ENCODE measurements at regions of chr19 and their contacts with region 1.

Region 1: DNA sequence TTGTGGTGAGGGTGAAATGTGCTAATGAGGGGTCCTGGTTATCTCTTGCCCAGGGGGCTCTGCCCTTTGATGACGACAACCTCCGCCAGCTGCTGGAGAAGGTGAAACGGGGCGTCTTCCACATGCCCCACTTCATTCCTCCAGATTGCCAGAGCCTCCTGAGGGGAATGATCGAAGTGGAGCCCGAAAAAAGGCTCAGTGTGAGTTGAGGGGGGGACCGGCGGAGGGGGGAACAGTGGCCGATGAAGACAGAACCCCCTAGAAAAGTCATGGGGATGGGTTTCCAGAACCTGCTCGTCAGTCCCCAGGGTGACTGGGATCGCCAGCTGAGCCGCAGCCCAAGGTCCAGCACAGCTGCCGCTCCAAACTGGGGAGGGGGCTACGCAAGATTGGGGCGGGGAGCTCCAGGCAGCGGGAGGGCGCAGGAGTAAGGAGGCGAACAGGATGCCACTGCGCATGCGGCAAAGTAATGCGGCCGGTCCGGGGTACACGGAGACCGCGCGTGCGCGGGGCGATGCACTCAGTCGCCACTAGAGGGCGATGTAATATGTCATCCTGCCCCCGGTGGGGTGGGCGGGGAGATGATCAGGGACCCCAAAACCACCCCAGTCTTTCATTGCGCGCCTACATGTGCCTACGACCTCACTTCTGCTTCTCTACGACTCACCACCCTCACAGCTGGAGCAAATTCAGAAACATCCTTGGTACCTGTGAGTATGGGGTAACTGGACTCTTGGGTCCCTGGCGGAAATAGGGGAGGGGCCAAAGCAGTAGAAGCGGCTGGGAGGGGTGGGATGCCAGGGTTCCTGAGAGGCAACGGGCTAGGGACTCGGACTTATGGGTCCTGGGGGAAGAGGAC is 17.9 kb downstream of the BRSK1 start:
- DNase-seq: peak; percentile 59
- ATAC-seq: peak; percentile 93
- H3K4me3 ChIP-seq: peak overlapping the region; percentile 67; the same call in 1 of the 2 replicates
- H3K27ac ChIP-seq: peak overlapping the region; percentile 27
- H3K4me1 ChIP-seq: peaks cover 11% of the 10 kb centered on the region
- H3K27me3 ChIP-seq: no peaks in the 10 kb centered on the region
- CTCF ChIP-seq: peak; percentile 91 to 97 (median 95)
- EP300 ChIP-seq: no peak
- POLR2A ChIP-seq: peak; percentile 37; the same call in 1 of the 2 replicates
- RAD21 ChIP-seq: peak; percentile 49

Region 2: GRCh38 chr19:55258828-55259539 is 42.7 kb before region 1 on chr19 and contains the start of gene PPP6R1:
- CTCF ChIA-PET with region 1: interaction called, 5 read pairs
- POLR2A ChIA-PET with region 1: interaction called, 4 read pairs
- RAD21 ChIA-PET with region 1: interaction called, 10 read pairs
- SMC1A ChIA-PET with region 1: interaction called, 10 read pairs
- in situ Hi-C with region 1: no loop called
- intact Hi-C with region 1: no loop called
- DNase-seq: peak; percentile 97
- ATAC-seq: peak; percentile 85
- H3K4me3 ChIP-seq: peak within 1 kb of the TSS; percentile 100
- H3K27ac ChIP-seq: peak within 1 kb of the TSS; percentile 96
- H3K4me1 ChIP-seq: peaks cover 7% of the 10 kb centered on the region
- H3K27me3 ChIP-seq: no peaks in the 10 kb centered on the region
- CTCF ChIP-seq: no peak
- EP300 ChIP-seq: 0 out of 4 replicates have a peak, but pooled peaks have one; percentile 5 to 30
- POLR2A ChIP-seq: peak; percentile 89
- RAD21 ChIP-seq: no peak
- polyA plus RNA-seq, gene PPP6R1: 0.80 to 2.5 TPM

Region 3: DNA sequence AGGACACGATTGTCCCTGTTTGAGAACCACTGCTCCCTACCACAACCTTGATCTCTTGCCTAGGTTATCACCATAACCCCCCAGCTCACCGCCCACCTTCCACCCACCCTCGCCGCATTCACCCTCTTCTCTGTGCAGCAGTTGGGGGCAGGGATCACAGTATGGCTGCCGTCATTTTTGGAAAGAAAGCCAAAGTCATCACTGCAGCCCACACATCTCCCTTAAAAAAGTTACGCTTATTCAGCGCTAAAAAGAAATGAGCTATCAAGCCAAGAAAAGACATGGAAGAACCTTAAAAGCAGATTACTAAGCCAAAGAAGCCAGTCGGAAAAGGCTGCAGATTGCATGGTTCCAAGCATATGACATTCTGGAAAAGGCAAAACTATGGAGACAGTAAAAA is 32.4 kb before region 1 on chr19:
- CTCF ChIA-PET with region 1: no interaction called
- POLR2A ChIA-PET with region 1: no interaction called
- RAD21 ChIA-PET with region 1: no interaction called
- SMC1A ChIA-PET with region 1: no interaction called
- in situ Hi-C with region 1: no loop called
- intact Hi-C with region 1: no loop called
- DNase-seq: no peak
- ATAC-seq: no peak
- H3K4me3 ChIP-seq: no peak overlapping the region
- H3K27ac ChIP-seq: no peak overlapping the region
- H3K4me1 ChIP-seq: no peaks in the 10 kb centered on the region
- H3K27me3 ChIP-seq: no peaks in the 10 kb centered on the region
- CTCF ChIP-seq: no peak
- EP300 ChIP-seq: no peak
- POLR2A ChIP-seq: no peak
- RAD21 ChIP-seq: no peak

Region 4: DNA sequence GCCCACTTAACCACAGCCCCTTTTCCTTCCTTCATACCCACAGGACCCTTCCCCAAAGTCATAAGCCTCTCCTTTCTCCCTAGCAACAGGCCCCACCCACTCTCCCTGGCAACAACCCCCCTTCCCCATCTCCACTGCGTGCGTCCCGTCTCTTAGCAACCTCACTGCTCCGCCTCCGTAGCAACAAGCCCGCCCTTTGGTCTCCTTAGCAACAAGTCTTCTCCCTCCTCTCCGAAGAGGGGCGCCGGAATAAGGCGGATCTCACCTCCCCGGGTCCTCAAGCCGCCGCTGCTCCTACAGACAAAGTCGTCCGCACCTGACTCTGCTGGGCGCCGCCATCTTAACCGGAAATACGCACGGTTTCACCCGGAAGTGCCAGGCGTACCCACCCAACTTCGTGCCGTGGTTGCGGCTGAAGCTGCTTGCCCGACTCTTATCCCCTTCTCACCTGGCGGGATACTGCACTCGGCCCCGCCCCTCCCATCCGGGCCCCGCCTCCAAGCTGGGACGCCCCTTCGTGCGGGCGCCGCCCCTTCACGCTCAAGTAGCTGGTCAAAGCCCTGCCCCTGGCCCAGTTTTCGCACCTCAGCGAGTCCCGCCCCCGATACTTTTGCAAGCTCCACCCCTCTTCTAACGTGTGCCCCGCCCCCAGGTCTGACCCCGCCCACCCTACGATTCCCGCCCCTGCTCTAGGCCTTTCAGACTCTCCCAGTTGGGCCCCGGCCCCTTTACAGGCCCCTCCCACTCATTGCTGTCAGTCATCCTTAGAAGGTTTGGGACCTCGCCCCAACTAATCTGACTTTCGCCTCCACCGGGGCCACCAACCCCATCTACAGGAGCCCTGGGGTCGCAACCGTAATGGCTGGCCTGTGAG is 21.7 kb before region 1 on chr19 and contains the start of gene HSPBP1:
- CTCF ChIA-PET with region 1: interaction called, 14 read pairs
- POLR2A ChIA-PET with region 1: no interaction called
- RAD21 ChIA-PET with region 1: interaction called, 3 read pairs
- SMC1A ChIA-PET with region 1: interaction called, 5 read pairs
- in situ Hi-C with region 1: no loop called
- intact Hi-C with region 1: no loop called
- DNase-seq: peak; percentile 93
- ATAC-seq: peak; percentile 91
- H3K4me3 ChIP-seq: peak within 1 kb of the TSS; percentile 82
- H3K27ac ChIP-seq: peak within 1 kb of the TSS; percentile 50
- H3K4me1 ChIP-seq: peaks cover 42% of the 10 kb centered on the region
- H3K27me3 ChIP-seq: no peaks in the 10 kb centered on the region; a peak in 1 of 4 replicates
- CTCF ChIP-seq: no peak
- EP300 ChIP-seq: no peak
- POLR2A ChIP-seq: peak; percentile 84
- RAD21 ChIP-seq: no peak
- polyA plus RNA-seq, gene HSPBP1: 0.18 to 1.3 TPM

Region 5: DNA sequence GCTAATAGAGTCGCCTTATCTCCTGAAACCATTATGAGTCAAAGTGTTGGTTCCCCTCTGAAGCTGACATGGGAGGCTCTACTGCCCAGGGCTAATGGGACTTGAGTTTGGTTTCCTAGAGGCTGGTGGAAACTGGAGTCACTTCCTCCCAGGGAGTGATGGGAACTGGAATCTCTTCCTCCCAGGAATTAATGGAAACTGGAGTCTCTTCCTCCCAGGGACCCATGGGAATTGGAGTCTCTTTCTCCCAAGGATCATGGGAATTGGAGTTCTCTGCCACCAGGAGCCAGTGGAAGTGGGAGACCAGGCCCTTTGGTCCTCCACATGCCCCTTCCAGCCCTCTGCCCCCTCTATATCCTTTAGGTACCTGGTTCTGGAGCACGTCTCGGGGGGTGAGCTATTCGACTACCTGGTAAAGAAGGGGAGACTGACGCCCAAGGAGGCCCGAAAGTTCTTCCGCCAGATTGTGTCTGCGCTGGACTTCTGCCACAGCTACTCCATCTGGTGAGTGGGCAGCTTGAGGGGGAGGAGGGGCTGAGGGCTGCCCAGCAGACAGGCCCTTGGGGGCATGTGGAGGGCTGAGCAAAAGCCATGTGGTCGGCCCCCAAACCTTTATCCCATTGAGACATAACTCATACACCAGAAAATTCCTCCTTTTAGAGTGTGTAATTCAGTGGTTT is 12.4 kb before region 1 on chr19:
- CTCF ChIA-PET with region 1: interaction called, 34 read pairs
- POLR2A ChIA-PET with region 1: interaction called, 3 read pairs
- RAD21 ChIA-PET with region 1: interaction called, 3 read pairs
- SMC1A ChIA-PET with region 1: interaction called, 7 read pairs
- in situ Hi-C with region 1: no loop called
- intact Hi-C with region 1: no loop called
- DNase-seq: no peak
- ATAC-seq: no peak
- H3K4me3 ChIP-seq: no peak overlapping the region
- H3K27ac ChIP-seq: no peak overlapping the region
- H3K4me1 ChIP-seq: no peaks in the 10 kb centered on the region
- H3K27me3 ChIP-seq: no peaks in the 10 kb centered on the region
- CTCF ChIP-seq: no peak
- EP300 ChIP-seq: no peak
- POLR2A ChIP-seq: no peak
- RAD21 ChIP-seq: no peak

Region 6: GRCh38 chr19:55312621-55313512 is 11.2 kb after region 1 on chr19:
- CTCF ChIA-PET with region 1: interaction called, 16 read pairs
- POLR2A ChIA-PET with region 1: no interaction called
- RAD21 ChIA-PET with region 1: no interaction called
- SMC1A ChIA-PET with region 1: no interaction called
- in situ Hi-C with region 1: no loop called
- intact Hi-C with region 1: no loop called
- DNase-seq: no peak
- ATAC-seq: no peak
- H3K4me3 ChIP-seq: no peak overlapping the region
- H3K27ac ChIP-seq: no peak overlapping the region
- H3K4me1 ChIP-seq: no peaks in the 10 kb centered on the region
- H3K27me3 ChIP-seq: no peaks in the 10 kb centered on the region
- CTCF ChIP-seq: no peak
- EP300 ChIP-seq: no peak
- POLR2A ChIP-seq: no peak
- RAD21 ChIP-seq: no peak

Region 7: DNA sequence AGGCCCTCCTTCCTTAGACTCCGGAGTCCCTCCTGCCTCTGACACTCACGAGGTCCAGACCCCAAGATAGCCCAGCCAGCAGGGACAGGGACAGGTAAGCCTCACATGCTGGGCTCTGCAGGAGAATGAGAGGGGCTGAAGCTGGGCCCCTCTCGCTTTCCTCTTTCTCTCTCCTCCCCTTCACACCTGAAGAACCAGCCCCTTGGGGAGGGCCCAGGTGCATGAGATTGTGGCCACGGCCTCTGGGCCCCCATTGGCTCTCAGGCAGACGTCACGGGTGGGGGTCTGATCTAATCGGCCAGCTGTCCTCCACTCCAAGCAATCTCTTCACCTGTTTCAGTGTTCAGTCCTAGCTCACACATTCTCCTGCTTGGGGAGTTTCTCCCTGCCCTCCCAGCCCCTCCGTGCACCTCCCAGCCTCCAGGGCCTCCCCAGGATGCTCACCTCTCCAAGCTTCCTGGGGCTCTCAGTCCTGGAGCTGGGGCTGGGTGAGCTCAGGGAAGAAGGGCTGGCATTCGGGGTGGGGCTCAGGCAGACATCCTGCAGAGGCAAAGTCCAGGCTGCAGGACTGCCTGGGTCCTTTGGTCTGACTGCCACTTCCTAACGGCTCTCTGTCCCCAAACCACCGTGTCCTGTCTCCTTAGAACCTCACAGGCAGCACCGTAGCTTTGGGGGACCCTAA is 20.7 kb after region 1 on chr19:
- CTCF ChIA-PET with region 1: interaction called, 13 read pairs
- POLR2A ChIA-PET with region 1: no interaction called
- RAD21 ChIA-PET with region 1: interaction called, 4 read pairs
- SMC1A ChIA-PET with region 1: interaction called, 5 read pairs
- in situ Hi-C with region 1: no loop called
- intact Hi-C with region 1: no loop called
- DNase-seq: no peak
- ATAC-seq: no peak
- H3K4me3 ChIP-seq: no peak overlapping the region
- H3K27ac ChIP-seq: no peak overlapping the region
- H3K4me1 ChIP-seq: no peaks in the 10 kb centered on the region
- H3K27me3 ChIP-seq: no peaks in the 10 kb centered on the region
- CTCF ChIP-seq: no peak
- EP300 ChIP-seq: no peak
- POLR2A ChIP-seq: no peak
- RAD21 ChIP-seq: no peak

Region 8: DNA sequence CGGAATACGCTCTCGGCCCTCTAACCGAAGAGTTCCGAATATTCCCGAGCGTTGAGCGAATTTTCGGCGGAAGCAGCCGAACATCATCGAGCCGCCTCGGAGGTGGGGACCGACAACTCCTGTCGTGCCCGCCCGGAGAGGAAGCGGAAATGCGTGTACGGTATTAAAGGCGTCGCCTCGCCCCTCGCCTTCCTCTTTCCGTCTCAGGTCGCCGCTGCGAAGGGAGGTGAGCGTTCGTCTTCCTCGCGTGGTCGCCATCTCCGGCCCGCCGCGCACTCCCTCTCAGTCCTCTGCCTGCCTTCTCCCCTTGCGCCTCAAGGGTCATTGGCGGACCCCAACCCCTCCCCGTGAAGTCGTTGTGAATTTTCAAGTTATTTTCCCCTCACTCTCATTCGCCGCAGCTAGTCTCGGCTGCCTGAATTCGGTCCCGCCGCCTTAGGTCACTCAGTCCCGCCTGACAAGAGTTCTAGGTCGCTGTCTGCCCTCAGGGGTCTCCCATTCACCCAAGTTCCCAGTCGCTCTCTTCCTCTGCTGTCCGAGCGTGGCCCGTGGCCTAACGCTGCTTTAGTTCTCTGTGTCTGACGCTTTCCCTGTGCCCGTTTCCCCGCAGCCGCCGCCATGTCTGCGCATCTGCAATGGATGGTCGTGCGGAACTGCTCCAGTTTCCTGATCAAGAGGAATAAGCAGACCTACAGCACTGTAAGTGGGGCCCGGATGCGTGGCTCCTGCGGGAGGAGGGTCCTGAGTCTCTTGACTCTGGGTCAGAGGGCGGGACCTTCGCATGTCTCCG is 84.2 kb after region 1 on chr19 and contains the start of gene RPL28:
- CTCF ChIA-PET with region 1: interaction called, 49 read pairs
- POLR2A ChIA-PET with region 1: interaction called, 9 read pairs
- RAD21 ChIA-PET with region 1: interaction called, 28 read pairs
- SMC1A ChIA-PET with region 1: interaction called, 22 read pairs
- in situ Hi-C with region 1: no loop called
- intact Hi-C with region 1: loop called (anchors 5 kb)
- DNase-seq: peak; percentile 93
- ATAC-seq: peak; percentile 80
- H3K4me3 ChIP-seq: peak within 1 kb of the TSS; percentile 94
- H3K27ac ChIP-seq: peak within 1 kb of the TSS; percentile 90
- H3K4me1 ChIP-seq: peaks cover 28% of the 10 kb centered on the region
- H3K27me3 ChIP-seq: no peaks in the 10 kb centered on the region
- CTCF ChIP-seq: no peak
- EP300 ChIP-seq: no peak
- POLR2A ChIP-seq: peak; percentile 100
- RAD21 ChIP-seq: no peak
- polyA plus RNA-seq, gene RPL28: 290 to 479 TPM

Measured in GM12878 (cell line).